MCF 10A (cell line): ENCODE measurements at regions of chr11 and their contacts with region 1.

Region 1: GRCh38 chr11:118634431-118635236 is 27.2 kb downstream of the PHLDB1 start:
- DNase-seq: peak; percentile 80
- H3K4me3 Mint-ChIP-seq: peak overlapping the region; percentile 67
- H3K27ac Mint-ChIP-seq: peak overlapping the region; percentile 31
- H3K4me1 Mint-ChIP-seq: peaks cover 17% of the 10 kb centered on the region
- H3K27me3 Mint-ChIP-seq: no peaks in the 10 kb centered on the region
- CTCF ChIP-seq: no peak

Region 2: DNA sequence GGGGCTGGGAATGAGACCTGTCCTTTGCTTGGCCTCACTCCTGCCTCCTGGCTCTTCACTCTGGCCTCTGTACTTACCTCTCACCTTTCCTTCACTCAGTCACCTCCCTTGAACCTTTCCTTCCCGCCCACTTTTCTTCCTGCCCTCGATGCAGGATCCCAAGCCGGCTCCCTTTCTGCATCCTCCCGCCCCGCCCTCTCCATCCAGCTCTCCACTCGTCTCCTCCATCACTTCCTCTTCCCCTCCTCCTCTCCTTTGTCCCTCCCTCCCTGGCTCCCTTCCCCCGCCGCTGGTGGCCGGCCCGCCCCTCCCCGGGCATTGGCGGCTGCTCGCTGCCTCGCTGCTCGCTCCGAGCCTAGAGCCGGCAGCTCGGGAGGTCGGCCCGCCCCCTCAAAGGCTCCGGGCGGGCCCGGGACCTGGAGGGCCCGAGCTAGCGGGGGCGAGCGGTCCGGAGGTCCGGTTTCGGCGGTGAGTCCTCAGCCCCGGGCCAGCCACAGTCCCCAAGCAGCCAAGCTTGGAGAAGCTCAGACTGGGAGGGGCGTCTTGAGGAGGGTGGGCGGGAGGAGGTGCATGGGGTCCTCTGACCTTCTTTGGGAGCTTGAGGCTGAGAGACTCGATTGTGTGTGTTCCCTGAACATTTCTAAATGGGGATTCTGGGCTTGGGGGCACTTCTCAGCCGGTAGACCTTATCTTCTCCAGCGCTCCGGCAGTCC is 13.4 kb before region 1 on chr11:
- CTCF ChIA-PET with region 1: interaction called, 20 read pairs
- POLR2A ChIA-PET with region 1: interaction called, 132 read pairs
- intact Hi-C with region 1: no loop called
- DNase-seq: peak; percentile 89
- H3K4me3 Mint-ChIP-seq: peak overlapping the region; percentile 71
- H3K27ac Mint-ChIP-seq: peak overlapping the region; percentile 38
- H3K4me1 Mint-ChIP-seq: peaks cover 73% of the 10 kb centered on the region
- H3K27me3 Mint-ChIP-seq: no peaks in the 10 kb centered on the region
- CTCF ChIP-seq: no peak

Region 3: DNA sequence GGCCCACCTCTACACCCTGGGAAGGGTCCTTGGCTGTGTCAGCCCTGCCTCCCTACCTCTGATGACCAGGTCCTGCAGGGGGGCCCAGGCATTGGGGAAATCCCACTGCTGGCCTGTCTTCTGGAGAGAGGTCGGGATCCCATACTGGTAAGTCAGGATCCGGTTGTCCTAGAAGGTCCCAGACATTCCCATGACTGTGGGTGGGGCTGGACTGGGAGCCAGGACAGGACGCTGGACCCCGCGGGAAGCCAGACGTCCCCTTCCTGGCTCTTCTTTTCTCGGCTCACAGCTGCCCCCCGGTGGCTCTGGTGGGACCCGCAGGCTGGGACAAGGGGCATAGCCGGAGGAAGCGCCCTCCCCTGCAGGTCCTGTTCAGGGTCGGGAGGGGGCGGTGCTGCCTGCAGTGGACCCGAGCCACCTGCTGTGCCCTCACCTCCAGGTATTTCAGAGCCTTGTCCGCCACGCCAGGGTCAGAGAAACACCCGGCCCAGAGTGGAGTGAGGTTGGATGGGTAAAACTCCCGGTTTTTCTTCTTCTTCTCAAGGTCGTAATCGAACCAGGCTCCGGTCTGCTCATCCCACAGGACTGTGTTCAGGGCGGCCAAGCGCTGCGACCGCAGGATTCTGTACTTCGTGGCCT is 24.8 kb after region 1 on chr11:
- CTCF ChIA-PET with region 1: interaction called, 19 read pairs
- POLR2A ChIA-PET with region 1: interaction called, 3 read pairs
- intact Hi-C with region 1: no loop called
- DNase-seq: peak; percentile 84
- H3K4me3 Mint-ChIP-seq: no peak overlapping the region
- H3K27ac Mint-ChIP-seq: no peak overlapping the region
- H3K4me1 Mint-ChIP-seq: no peaks in the 10 kb centered on the region
- H3K27me3 Mint-ChIP-seq: no peaks in the 10 kb centered on the region
- CTCF ChIP-seq: peak; percentile 96